Left lung (tissue), 14 donors: ENCODE measurements at regions of chr6 and their contacts with region 1.

Region 1: GRCh38 chr6:70371454-70372105 is 41.7 kb upstream of the FAM135A start:
- DNase-seq: peak in 2 of 4 donors; percentile 71 to 76
- ATAC-seq: peak; percentile 85
- H3K4me3 ChIP-seq: no peak overlapping the region
- H3K27ac ChIP-seq: no peak overlapping the region
- H3K4me1 ChIP-seq: no peaks in the 10 kb centered on the region
- H3K27me3 ChIP-seq: no peaks in the 10 kb centered on the region
- CTCF ChIP-seq: peak; percentile 53 to 61

Region 2: DNA sequence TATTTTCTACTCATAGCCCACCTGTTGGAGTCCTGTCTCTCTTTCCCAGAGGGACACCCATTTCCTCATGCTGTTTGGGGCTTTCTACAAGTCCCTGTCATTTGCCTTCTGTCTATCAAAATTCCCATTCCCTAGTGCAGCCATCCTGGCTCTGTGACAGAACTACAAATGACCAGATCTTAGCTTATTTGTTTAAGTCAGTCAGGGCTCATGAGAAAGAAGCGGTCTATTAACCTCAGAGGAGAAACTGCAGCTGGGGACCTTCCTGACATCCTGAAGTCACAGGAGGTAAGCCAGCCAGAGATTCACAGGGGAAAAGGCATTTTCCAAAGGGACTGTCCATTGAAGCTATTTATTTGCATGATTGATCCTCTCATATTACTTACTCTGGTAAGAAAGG is 67.0 kb before region 1 on chr6:
- intact Hi-C with region 1: loop called in 1 of 2 experiments (anchors 5 kb)
- DNase-seq: no peak
- ATAC-seq: no peak
- H3K4me3 ChIP-seq: no peak overlapping the region
- H3K27ac ChIP-seq: no peak overlapping the region
- H3K4me1 ChIP-seq: no peaks in the 10 kb centered on the region
- H3K27me3 ChIP-seq: peaks cover 8 to 18% of the 10 kb centered on the region in 2 donors
- CTCF ChIP-seq: no peak